ENCODE measurements at regions of chr11 and their contacts with region 1.

Region 1: DNA sequence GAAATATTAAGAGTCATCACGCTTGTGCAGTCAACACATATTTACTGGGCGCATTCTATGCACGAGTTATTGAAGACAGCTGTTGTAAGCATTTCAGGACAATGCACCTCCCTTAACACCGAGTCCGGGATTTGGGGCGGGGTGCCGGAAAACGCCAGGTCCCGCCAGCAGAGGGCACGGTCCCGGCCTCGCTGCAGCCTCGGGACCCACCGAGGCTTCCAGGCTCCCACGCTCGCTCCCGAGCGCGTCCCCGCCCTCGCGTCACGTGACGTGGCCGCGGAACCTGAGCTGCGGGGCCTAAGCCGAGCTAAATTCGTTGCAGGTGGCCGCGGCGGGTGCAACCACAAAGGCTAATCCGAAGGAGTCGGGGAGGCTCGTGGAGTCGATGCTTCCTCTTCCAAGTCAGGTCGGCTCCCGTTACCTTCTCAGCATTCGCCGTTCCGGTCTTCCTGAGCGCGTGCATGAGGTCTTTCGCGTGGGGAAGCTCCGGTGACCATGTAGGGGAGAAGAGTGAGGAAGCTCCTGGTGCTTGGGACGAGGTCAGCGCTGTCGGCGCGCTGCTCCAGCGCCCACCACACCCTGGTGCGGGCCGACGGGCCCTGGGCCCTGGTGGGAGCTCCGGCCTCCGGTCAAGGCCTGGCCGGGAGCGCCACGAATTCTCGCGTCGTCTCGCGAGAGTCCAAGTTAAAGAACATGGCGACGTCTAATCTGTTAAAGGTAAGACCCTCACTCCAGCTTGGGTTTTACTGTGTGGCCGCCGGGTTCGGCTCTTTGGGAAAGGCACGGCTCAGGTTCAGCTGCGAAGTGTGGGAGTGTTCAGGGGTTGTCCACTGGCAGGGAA is at the start of gene CUL5:
- DNase-seq: peak; percentile 90
- ATAC-seq: peak; percentile 89
- H3K4me3 Mint-ChIP-seq: peak within 1 kb of the TSS; percentile 87
- H3K27ac Mint-ChIP-seq: peak within 1 kb of the TSS; percentile 96
- H3K4me1 Mint-ChIP-seq: peaks cover 14% of the 10 kb centered on the region
- H3K27me3 Mint-ChIP-seq: no peaks in the 10 kb centered on the region
- total RNA-seq, gene CUL5: 29.7 to 31.3 TPM

Region 2: DNA sequence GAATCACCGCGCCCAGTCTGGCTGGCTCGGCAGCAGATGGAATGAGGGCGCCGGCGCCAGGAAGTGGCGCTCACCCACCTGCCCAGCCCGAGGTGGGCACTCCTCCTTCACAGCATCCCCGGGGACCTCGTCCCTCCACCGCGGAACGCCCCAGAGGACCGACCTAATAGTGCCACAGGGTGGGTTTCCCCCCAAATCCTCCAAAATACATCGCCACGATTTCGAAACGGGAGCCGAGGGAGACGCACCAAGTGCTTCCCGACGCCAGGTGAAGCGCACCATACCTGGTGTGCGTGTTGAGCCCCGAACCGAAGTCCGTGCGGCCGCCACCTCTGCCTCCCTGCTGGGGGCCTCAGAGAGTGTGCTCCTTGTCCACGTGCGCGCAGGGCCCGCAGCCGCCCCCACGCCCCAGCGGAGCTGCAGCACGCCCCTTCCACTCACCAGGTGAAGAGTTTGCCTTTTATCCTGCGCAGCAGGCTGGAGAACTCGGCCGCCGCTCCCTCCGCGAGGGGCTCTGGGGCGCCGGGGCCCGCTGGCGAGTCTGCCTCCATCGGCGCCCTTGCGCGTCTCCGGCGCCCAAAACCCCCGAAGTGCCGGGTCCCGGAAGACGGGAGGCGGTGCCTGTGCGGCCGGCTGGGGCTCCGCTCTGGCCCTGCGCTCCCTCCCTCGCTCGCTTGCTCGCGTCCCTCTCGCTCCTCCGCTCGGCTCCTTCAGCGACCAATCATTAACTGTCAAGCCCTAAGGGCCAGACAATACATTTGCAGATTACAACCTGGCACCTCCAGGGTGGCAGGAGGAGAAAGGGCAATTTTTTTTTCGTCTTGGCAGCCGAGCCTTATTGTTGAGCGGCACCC is 150.4 kb before region 1 on chr11 and contains the start of gene SLC35F2:
- CTCF ChIA-PET with region 1: no interaction called
- POLR2A ChIA-PET with region 1: no interaction called
- DNase-seq: peak; percentile 76
- ATAC-seq: peak; percentile 89
- H3K4me3 Mint-ChIP-seq: peak within 1 kb of the TSS; percentile 93
- H3K27ac Mint-ChIP-seq: peak within 1 kb of the TSS; percentile 80
- H3K4me1 Mint-ChIP-seq: peaks cover 25% of the 10 kb centered on the region
- H3K27me3 Mint-ChIP-seq: peaks cover 2% of the 10 kb centered on the region
- total RNA-seq, gene SLC35F2: 8.7 to 11.0 TPM

Region 3: DNA sequence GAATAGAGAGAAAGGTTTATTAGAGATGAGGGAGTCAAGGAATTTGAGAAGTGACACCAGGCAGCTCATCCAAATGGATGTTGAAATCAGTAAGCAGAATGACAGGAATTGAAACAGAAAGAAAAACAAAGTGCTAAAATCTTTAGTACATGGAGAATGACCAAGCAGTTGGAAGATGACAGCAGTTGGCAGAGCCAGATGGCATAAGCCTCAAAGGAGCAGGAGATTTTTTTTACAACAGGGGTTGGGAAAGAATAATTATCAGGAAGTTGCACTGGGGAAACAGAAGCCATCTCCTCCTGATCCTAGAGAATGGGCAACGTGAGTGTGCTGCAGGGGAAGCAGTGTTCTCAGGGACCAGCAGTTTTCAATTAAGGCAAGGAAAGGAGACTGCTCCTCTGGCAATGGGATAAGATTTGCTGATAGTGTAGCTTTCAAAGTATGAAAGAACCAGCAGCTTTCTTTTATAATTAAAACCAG is 51.7 kb before region 1 on chr11:
- CTCF ChIA-PET with region 1: no interaction called
- POLR2A ChIA-PET with region 1: no interaction called
- DNase-seq: no peak
- ATAC-seq: no peak
- H3K4me3 Mint-ChIP-seq: no peak overlapping the region
- H3K27ac Mint-ChIP-seq: no peak overlapping the region
- H3K4me1 Mint-ChIP-seq: peaks cover 4% of the 10 kb centered on the region
- H3K27me3 Mint-ChIP-seq: peaks cover 15% of the 10 kb centered on the region

Region 4: DNA sequence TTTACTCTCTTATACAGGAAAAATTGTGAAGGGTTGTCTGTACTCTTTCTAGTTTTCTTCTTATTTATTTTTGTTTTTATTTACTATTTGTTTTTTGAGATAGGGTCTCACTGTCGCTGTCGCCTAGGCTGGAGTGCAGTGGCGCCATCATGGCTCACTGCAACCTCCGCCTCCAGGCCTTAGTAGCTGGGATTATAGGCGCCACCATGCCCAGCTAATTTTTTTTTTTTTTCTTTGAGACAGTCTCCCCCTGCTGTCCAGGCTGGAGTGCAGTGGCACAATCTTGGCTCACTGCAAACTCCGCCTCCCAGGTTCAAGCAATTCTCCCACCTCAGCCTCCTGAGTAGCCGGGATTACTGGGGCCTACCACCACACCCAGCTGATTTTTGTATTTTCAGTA is 18.2 kb after region 1 on chr11:
- CTCF ChIA-PET with region 1: interaction called, 10 read pairs
- POLR2A ChIA-PET with region 1: interaction called, 3 read pairs
- DNase-seq: no peak
- ATAC-seq: no peak
- H3K4me3 Mint-ChIP-seq: no peak overlapping the region
- H3K27ac Mint-ChIP-seq: no peak overlapping the region
- H3K4me1 Mint-ChIP-seq: peaks cover 8% of the 10 kb centered on the region
- H3K27me3 Mint-ChIP-seq: no peaks in the 10 kb centered on the region

Region 5: DNA sequence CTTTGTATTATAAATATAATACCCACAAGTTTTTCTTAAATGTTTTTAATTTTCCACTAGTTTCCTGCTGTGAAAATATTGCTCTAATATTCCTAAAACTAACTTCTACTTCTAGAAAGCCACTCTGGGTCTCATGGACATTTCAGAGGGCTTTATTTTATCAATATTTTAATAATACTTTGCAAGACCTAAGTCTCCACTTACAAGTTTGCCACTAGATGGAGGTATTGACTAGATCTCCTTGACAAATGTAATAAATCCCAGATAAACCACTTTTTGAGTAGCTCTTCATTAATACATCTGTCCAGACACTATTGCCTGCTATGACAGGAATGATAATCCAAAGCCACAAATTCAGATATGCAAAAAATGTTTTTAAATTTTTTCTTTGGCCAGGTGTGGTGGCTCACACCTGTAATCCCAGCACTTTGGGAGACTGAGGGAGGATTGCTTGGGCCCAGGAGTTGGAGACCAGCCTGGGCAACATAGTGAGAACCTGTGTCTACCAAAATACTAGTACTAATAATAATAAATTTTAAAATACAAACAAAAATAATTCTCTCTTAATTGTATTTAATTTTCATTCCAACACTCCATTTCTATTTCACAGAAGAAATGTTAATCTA is 109.0 kb after region 1 on chr11:
- CTCF ChIA-PET with region 1: interaction called, 11 read pairs
- POLR2A ChIA-PET with region 1: interaction called, 3 read pairs
- DNase-seq: no peak
- ATAC-seq: no peak
- H3K4me3 Mint-ChIP-seq: no peak overlapping the region
- H3K27ac Mint-ChIP-seq: no peak overlapping the region
- H3K4me1 Mint-ChIP-seq: peaks cover 19% of the 10 kb centered on the region
- H3K27me3 Mint-ChIP-seq: no peaks in the 10 kb centered on the region

Region 6: GRCh38 chr11:108647701-108648527 is 639.0 kb after region 1 on chr11:
- CTCF ChIA-PET with region 1: interaction called, 11 read pairs
- POLR2A ChIA-PET with region 1: no interaction called
- DNase-seq: peak; percentile 73
- ATAC-seq: peak; percentile 90
- H3K4me3 Mint-ChIP-seq: no peak overlapping the region
- H3K27ac Mint-ChIP-seq: no peak overlapping the region
- H3K4me1 Mint-ChIP-seq: no peaks in the 10 kb centered on the region
- H3K27me3 Mint-ChIP-seq: peaks cover 1% of the 10 kb centered on the region

Measured in activated CD8-positive, alpha-beta T cell treated with anti-CD3 and anti-CD28 coated beads, Interleukin-2, amount 10 ng/mL, durations not matched to agents 7 days and 5 days (primary cell).